ENCODE measurements at regions of chr10 and their contacts with region 1.

Region 1: DNA sequence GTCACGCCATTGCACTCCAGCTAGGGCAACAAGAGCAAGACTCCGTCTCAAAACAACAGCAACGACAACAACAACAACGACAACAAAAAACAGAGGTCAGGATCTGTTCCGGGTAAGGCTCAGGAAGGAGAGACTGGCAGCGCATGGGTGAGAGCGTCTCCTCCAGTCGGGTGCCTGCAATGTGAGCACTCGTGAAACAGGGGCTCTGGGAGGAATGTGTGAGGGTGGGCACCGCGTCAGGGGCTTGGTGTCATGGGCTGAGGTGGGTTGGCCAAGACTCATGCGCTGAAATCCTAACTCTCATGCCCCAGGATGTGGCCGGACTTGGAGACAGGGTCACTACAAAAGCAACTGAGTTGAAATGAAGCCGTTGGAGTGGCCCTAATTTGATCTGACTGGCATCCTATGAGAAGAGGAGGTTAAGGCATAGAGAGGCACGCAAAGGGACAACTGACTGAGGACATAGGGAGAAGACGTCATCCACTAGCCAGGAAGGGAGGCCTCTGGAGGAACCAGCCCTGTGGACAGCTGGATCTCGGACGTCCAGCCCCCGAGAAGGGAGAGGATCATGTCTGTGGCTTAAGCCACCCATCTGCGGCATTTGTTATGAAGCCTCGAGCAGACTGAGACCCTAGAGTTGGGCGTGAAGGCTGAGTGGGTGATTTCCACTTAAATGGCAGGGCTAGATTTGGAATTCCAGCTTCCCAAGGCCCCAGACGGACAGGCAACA is 241.5 kb upstream of the PITRM1 start:
- DNase-seq: no peak
- H3K4me3 ChIP-seq: no peak overlapping the region
- H3K27ac ChIP-seq: no peak overlapping the region
- H3K4me1 ChIP-seq: no peaks in the 10 kb centered on the region
- H3K27me3 ChIP-seq: no peaks in the 10 kb centered on the region
- CTCF ChIP-seq: no peak

Region 2: GRCh38 chr10:3435671-3436070 is 21.6 kb after region 1 on chr10:
- CTCF ChIA-PET with region 1: interaction called, 12 read pairs
- POLR2A ChIA-PET with region 1: no interaction called
- intact Hi-C with region 1: no loop called
- DNase-seq: no peak
- H3K4me3 ChIP-seq: no peak overlapping the region
- H3K27ac ChIP-seq: no peak overlapping the region
- H3K4me1 ChIP-seq: no peaks in the 10 kb centered on the region
- H3K27me3 ChIP-seq: no peaks in the 10 kb centered on the region
- CTCF ChIP-seq: no peak

Region 3: DNA sequence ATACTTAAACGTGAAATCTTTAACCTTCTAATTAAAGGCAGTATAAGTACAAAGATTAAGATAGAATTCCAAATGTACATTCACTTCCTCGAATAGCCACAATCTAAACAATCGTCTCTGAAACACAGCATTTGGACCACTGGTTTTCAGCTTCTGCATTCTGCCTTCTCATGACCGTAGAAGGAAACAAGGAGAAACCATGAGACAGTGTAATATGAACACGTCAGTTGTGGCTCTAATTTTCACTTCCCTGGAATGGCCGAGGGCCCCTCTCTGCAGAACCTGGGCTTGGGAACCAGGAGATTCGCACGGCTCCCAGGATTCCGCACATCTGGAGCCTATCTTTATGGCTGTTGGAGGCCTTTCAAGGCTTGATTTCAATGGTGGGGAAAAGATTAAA is 181.6 kb after region 1 on chr10:
- CTCF ChIA-PET with region 1: no interaction called
- POLR2A ChIA-PET with region 1: no interaction called
- intact Hi-C with region 1: no loop called
- DNase-seq: no peak
- H3K4me3 ChIP-seq: no peak overlapping the region
- H3K27ac ChIP-seq: no peak overlapping the region
- H3K4me1 ChIP-seq: no peaks in the 10 kb centered on the region
- H3K27me3 ChIP-seq: no peaks in the 10 kb centered on the region
- CTCF ChIP-seq: no peak